AG04449 (cell line): ENCODE measurements at regions of chr7 and their contacts with region 1.

Region 1: DNA sequence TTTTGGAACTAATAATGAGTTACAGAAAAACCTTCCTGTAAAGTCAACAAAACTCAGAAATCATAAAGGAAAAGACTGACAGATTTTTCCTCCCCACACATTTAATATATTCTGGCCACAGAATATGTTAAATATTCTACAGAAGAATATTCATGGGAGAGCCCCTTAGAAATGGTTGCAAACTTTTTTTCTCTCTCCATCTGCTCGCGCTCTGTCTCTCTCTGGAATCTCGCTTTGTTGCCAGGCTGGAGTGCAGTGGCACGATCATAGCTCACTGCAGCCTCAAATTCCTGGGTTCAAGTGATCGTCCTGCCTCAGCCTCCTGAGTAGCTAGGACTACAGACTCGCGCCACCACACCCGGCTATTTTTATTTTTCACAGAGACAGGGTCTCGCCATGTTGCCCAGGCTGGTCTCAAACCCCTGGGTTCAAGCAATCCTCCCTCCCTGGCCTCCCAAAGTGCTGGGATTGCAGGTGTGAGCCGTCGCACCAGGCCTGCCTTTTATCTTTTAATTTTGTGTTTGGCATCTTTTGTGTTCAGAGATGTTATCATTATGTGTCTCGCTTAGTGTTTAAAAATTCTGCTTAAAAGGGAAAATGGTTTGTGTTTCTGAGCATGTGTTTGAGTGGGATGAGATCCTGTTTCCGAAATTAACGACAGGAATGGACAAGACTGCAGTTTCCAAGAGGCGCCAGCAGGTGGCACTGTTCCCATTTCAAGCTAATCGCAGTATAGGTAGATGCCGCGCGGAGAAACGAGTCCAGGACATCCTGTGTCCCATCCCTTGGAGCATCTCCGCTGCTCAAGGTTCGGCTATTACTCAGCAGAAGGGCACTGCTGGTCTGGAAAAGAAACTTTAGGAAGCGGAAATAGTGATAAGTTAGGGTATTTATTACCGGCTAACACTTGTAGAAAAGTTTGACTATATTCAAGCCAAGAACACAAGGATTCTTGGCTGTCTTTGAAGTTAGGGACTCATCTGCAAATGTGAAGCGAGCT is 23.1 kb upstream of the ST7 start:
- DNase-seq: no peak
- H3K4me3 ChIP-seq: no peak overlapping the region
- CTCF ChIP-seq: peak; percentile 79

Region 2: GRCh38 chr7:116918704-116919103 is 11.5 kb before region 1 on chr7:
- CTCF ChIA-PET with region 1: interaction called, 35 read pairs
- POLR2A ChIA-PET with region 1: no interaction called
- DNase-seq: peak; percentile 45
- H3K4me3 ChIP-seq: no peak overlapping the region
- CTCF ChIP-seq: no peak

Region 3: DNA sequence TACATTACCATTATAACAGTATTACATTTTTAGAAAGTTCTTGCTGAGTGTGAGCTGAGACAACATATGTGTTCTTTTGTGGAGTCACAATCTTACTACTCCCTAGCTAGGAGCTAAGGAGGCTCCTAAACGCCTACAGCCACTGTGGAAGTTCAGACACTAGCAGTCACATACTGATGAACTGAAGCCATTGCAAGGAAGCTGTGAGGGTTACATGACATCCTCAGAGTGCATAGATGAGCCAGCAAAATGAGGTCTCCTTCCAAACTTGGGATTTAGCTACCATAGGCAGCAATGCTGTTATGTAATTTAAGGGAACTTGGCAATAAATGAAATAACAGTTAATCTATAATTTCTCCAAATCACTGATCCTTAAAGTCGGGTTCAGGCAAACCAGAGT is 12.3 kb after region 1 on chr7:
- CTCF ChIA-PET with region 1: interaction called, 31 read pairs
- POLR2A ChIA-PET with region 1: no interaction called
- DNase-seq: no peak
- H3K4me3 ChIP-seq: no peak overlapping the region
- CTCF ChIP-seq: no peak

Region 4: GRCh38 chr7:116948934-116949333 is 18.7 kb after region 1 on chr7:
- CTCF ChIA-PET with region 1: interaction called, 19 read pairs
- POLR2A ChIA-PET with region 1: no interaction called
- DNase-seq: no peak
- H3K4me3 ChIP-seq: no peak overlapping the region
- CTCF ChIP-seq: no peak